ENCODE measurements at regions of chr10 and their contacts with region 1.

Region 1: DNA sequence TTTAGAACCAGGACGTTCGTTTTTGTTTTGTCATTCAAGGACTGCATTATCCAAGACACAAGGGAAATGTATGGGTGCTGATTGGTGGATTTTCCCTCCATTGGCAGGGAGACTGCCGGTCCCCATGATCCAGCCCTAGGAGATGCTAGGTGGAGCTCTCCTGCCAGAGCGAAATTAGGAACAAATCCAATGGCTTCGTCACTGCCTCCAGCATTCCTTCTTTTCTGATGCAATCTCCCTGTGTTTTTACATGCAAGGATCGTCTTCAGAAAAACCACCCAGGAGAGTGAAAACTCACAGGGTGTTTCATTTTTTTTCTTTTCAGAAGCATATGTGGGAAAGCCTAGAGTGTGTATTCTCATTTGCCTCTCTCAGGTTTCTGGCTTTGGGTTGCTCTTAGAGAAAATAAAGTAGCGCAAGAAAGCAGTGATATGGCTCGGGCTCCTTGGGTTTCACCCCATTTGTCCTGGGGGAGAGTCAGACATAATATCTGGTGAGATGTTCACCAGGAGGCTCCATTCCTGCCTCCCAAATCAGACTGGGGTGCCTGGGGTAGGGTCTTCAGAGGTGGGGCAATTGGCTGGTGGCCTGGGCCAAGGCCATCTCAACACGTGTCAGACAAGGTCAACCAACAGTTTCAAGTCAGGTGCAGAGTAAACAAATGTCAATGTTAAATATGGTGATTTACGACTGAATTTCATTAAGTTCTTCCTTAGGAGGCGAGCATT is 450.9 kb upstream of the MKI67 start:
- DNase-seq: no peak
- ATAC-seq: no peak
- H3K4me3 ChIP-seq: no peak overlapping the region
- H3K27ac ChIP-seq: peak overlapping the region; percentile 14; the same call in 1 of the 3 replicates
- H3K4me1 ChIP-seq: peaks cover 14 to 28% of the 10 kb centered on the region in 2 experiments; a peak in 4 of 5 replicates
- H3K27me3 ChIP-seq: no peaks in the 10 kb centered on the region
- CTCF ChIP-seq: no peak
- EP300 ChIP-seq: no peak
- POLR2A ChIP-seq: no peak
- RAD21 ChIP-seq: no peak

Region 2: GRCh38 chr10:127133672-127134500 is 1443.2 kb before region 1 on chr10:
- CTCF ChIA-PET with region 1: no interaction called
- POLR2A ChIA-PET with region 1: no interaction called
- in situ Hi-C with region 1: no loop called
- intact Hi-C with region 1: no loop called
- DNase-seq: no peak
- ATAC-seq: no peak
- H3K4me3 ChIP-seq: no peak overlapping the region
- H3K27ac ChIP-seq: no peak overlapping the region
- H3K4me1 ChIP-seq: no peaks in the 10 kb centered on the region
- H3K27me3 ChIP-seq: no peaks in the 10 kb centered on the region
- CTCF ChIP-seq: no peak
- EP300 ChIP-seq: no peak
- POLR2A ChIP-seq: no peak
- RAD21 ChIP-seq: no peak

Region 3: GRCh38 chr10:128540781-128541761 is 36.0 kb before region 1 on chr10:
- CTCF ChIA-PET with region 1: no interaction called
- POLR2A ChIA-PET with region 1: no interaction called
- in situ Hi-C with region 1: no loop called
- intact Hi-C with region 1: no loop called
- DNase-seq: no peak
- ATAC-seq: no peak
- H3K4me3 ChIP-seq: no peak overlapping the region
- H3K27ac ChIP-seq: no peak overlapping the region
- H3K4me1 ChIP-seq: peaks cover 5 to 11% of the 10 kb centered on the region in 2 experiments; a peak in 3 of 5 replicates
- H3K27me3 ChIP-seq: no peaks in the 10 kb centered on the region
- CTCF ChIP-seq: no peak
- EP300 ChIP-seq: no peak
- POLR2A ChIP-seq: no peak
- RAD21 ChIP-seq: 0 out of 4 replicates have a peak, but pooled peaks of 1 of the 2 experiments have one; percentile 15

Region 4: DNA sequence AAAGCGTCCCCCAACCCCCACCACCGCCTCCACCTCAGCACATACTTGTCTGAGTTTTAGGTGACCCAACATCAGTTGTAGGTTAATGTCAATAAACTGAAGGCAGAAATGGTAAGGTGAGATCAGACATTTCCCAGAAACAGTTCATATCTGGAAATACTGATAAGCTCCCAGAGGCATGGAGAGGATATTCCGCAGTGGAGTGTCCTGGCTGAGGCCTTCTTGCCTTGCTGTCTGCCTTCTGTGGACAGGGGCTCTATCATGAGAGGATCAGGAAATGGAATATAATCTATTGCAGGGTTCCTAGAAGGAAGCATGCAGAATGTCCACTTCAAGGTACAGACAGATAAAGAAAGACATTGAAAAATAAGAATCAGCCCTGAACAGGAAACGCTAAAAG is 22.4 kb after region 1 on chr10:
- CTCF ChIA-PET with region 1: no interaction called
- POLR2A ChIA-PET with region 1: interaction called, 3 read pairs
- in situ Hi-C with region 1: no loop called
- intact Hi-C with region 1: loop called (anchors 2 kb)
- DNase-seq: peak; percentile 76 to 90 (median 80)
- ATAC-seq: peak; percentile 92
- H3K4me3 ChIP-seq: no peak overlapping the region
- H3K27ac ChIP-seq: peak overlapping the region; percentile 70
- H3K4me1 ChIP-seq: peaks cover 0 to 15% of the 10 kb centered on the region in 2 experiments; a peak in 3 of 5 replicates
- H3K27me3 ChIP-seq: no peaks in the 10 kb centered on the region
- CTCF ChIP-seq: no peak
- EP300 ChIP-seq: peak; percentile 93
- POLR2A ChIP-seq: no peak
- RAD21 ChIP-seq: no peak

Region 5: GRCh38 chr10:128631801-128632241 is 54.7 kb after region 1 on chr10:
- CTCF ChIA-PET with region 1: no interaction called
- POLR2A ChIA-PET with region 1: no interaction called
- in situ Hi-C with region 1: no loop called
- intact Hi-C with region 1: loop called (anchors 5 kb)
- DNase-seq: peak in 2 of 4 experiments; percentile 14 to 30
- ATAC-seq: no peak
- H3K4me3 ChIP-seq: no peak overlapping the region
- H3K27ac ChIP-seq: no peak overlapping the region
- H3K4me1 ChIP-seq: peaks cover 10 to 12% of the 10 kb centered on the region in 2 experiments; a peak in 4 of 5 replicates
- H3K27me3 ChIP-seq: no peaks in the 10 kb centered on the region
- CTCF ChIP-seq: peak; percentile 22 to 46 (median 43); a peak in 4 of 6 replicates
- EP300 ChIP-seq: no peak
- POLR2A ChIP-seq: no peak
- RAD21 ChIP-seq: no peak

Region 6: DNA sequence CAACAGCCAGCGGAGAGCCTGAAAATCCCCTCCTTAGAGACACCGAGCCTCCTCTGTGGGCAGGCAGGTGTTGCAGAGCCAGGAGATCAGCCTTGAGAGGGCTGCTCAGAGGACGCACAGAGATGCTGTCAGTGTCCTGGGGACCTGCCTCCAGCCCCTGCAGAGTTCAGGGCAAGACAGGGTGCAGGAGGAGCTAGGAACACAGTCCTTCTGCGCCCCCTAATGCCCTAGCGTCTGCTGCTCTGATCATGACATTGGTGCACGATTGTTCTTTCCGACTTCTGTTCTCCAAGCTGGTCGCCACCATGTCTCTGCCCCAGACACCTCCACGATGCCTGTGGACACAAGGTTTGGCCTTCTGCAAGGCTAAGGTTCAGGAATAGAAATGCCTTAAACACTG is 162.8 kb after region 1 on chr10:
- CTCF ChIA-PET with region 1: no interaction called
- POLR2A ChIA-PET with region 1: no interaction called
- in situ Hi-C with region 1: no loop called
- intact Hi-C with region 1: loop called (anchors 10 kb)
- DNase-seq: peak in 3 of 4 experiments; percentile 7 to 55 (median 51)
- ATAC-seq: peak; percentile 99
- H3K4me3 ChIP-seq: no peak overlapping the region
- H3K27ac ChIP-seq: no peak overlapping the region
- H3K4me1 ChIP-seq: no peaks in the 10 kb centered on the region; a peak in 2 of 5 replicates
- H3K27me3 ChIP-seq: peaks cover 3 to 16% of the 10 kb centered on the region in 2 experiments; a peak in 3 of 5 replicates
- CTCF ChIP-seq: peak; percentile 56 to 61 (median 59)
- EP300 ChIP-seq: no peak
- POLR2A ChIP-seq: no peak
- RAD21 ChIP-seq: peak in 1 of 2 experiments; percentile 64; a peak in 2 of 4 replicates

Region 7: DNA sequence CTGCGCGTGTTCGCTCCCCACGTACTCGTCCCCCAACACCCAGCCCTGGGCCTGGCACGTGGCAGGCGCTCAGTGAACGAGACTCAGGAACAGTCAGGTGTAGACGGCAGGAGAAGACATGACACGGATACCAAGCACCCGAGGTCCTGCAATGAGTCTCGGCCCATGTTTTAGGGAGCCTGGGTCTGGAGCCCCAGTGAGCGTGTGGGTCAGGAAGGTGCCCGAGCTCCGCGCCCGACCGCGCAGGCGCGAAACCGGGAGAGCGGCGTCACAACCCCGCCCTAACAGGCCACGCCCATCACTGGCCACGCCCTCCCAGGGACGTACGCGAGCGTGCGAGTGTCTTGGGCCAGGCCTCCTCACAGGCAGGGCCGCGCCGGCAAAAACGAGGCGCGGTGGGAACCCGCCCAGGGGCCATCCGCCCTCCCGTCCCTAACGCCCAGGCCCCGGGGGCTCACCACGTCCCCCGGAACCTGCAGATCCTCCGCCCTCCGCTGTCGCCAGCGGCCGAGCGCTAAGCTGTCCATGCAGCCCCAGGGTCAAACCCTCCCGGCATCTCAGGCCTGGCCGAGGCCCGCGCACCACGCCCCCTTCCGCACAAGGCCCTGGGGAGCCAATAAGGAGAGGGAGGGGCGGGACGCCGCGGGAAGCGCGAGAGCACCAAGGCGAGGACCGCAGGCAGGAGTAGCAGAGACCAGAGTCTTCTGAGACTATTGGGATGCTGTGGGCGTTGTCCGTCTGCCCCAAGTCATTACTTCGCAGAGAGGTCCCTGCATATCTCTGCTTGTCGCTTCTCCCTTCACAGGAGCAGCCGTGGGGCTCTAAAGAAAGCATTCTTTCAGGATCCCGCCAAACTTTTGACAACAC is 1533.4 kb after region 1 on chr10 and contains the start of gene C10orf143:
- CTCF ChIA-PET with region 1: no interaction called
- POLR2A ChIA-PET with region 1: no interaction called
- in situ Hi-C with region 1: loop called (anchors 25 kb)
- intact Hi-C with region 1: no loop called
- DNase-seq: peak; percentile 93 to 95 (median 95)
- ATAC-seq: peak; percentile 94
- H3K4me3 ChIP-seq: peak within 1 kb of the TSS; percentile 68
- H3K27ac ChIP-seq: peak within 1 kb of the TSS; percentile 84
- H3K4me1 ChIP-seq: peaks cover 3 to 24% of the 10 kb centered on the region in 2 experiments; a peak in 3 of 5 replicates
- H3K27me3 ChIP-seq: no peaks in the 10 kb centered on the region
- CTCF ChIP-seq: no peak
- EP300 ChIP-seq: no peak; the same call in 1 of the 2 replicates
- POLR2A ChIP-seq: peak; percentile 94
- RAD21 ChIP-seq: no peak
- polyA plus RNA-seq, gene C10orf143: 0.07 TPM in 1 of 2 experiments, not detected in the other

Measured in K562 (cell line).